Posterior vena cava (tissue), 2 donors: ENCODE measurements at regions of chr18 and their contacts with region 1.

Region 1: GRCh38 chr18:34867520-34867919 is 157.4 kb downstream of the DTNA start:
- DNase-seq: no peak

Region 2: DNA sequence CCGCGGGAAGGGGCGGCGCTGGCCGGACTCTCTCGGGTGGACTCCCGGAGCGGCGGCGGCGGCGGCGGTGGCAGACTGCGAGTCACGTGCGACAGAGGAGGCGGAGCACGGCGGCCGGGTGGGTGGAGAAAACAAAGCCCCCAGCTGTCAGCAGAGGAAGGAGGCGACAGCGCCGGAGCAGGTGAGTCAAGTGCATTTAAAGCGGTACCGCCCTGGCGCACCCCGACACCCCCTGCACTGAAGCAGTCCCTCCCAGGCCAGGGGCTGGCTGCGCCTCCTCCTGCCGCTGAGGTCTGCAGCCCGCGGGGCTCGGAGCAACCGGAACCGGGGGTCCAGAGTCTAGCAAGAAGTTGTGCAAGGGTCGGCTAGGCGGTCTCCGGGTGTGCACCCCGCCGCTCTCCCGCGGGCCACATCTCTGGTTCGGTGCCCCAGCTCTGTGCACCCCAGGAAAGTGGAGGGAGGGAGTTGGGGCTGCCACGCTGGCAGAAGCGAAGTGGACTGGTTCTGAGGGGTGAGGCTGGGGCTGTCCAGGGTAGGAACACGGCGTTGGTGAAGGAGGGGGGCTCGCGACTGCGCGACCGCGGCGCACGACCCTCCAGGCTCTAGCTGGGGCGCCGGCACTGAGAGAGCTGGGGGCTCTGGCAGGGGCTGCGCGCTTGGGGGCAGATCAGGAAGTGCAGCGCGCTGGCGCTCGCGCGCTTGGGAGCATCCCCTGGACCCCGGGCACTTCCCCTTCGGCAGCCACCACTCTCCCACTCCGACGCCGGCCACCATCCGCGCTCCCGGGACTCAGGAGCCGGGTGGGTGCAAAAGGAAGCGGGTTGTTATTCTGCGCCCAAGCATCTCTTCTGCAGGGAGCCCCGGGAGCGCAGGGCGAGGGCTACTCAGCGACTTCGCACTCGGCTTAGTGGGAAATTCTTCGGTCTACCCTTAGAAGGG is 109.6 kb after region 1 on chr18:
- intact Hi-C with region 1: loop called in 1 of 2 experiments (anchors 10 kb)
- DNase-seq: peak; percentile 90

Region 3: GRCh38 chr18:34999756-35000289 is 132.3 kb after region 1 on chr18:
- intact Hi-C with region 1: loop called in 1 of 2 experiments (anchors 10 kb)
- DNase-seq: peak; percentile 78